Head of caudate nucleus (tissue), 42 donors: ENCODE measurements at regions of chr7 and their contacts with region 1.

Region 1: GRCh38 chr7:43582503-43583423 is at the start of gene STK17A:
- DNase-seq: peak; percentile 76 to 96 (median 90)

Region 2: DNA sequence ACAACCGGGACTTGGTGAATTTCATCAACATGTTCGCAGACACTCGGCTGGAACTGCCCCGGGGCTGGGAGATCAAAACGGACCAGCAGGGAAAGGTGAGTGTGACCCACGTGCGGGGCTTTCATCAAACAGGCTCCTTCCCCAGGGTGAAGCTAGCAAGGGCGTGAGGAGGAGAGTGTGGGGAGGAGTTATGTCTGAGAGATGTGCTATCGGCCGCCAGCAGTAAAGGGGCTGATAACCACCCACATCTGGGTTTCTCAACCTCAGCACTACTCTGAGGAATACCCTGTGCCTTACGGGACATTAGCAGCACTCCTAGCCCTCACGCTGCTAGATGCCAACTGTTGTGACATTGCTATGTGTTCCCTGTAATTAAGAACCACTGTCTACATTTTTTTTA is 113.8 kb before region 1 on chr7:
- intact Hi-C with region 1: no loop called
- DNase-seq: no peak

Region 3: GRCh38 chr7:43700059-43700501 is 117.3 kb after region 1 on chr7:
- intact Hi-C with region 1: loop called (anchors 1 kb)
- DNase-seq: peak in 1 of 42 donors; percentile 23

Region 4: GRCh38 chr7:43808135-43808809 is 225.5 kb after region 1 on chr7:
- intact Hi-C with region 1: no loop called
- DNase-seq: no peak

Region 5: GRCh38 chr7:43834463-43835251 is 251.9 kb after region 1 on chr7:
- intact Hi-C with region 1: loop called (anchors 5 kb)
- DNase-seq: no peak